ENCODE measurements at regions of chr3 and their contacts with region 1.

Region 1: GRCh38 chr3:130539005-130539404 is 22.0 kb downstream of the COL6A6 start:
- DNase-seq: peak; percentile 83
- H3K4me3 Mint-ChIP-seq: no peak overlapping the region
- H3K27ac Mint-ChIP-seq: no peak overlapping the region
- H3K4me1 Mint-ChIP-seq: no peaks in the 10 kb centered on the region
- H3K27me3 Mint-ChIP-seq: peaks cover 44% of the 10 kb centered on the region
- CTCF ChIP-seq: peak; percentile 95

Region 2: GRCh38 chr3:130276203-130276803 is 262.7 kb before region 1 on chr3:
- CTCF ChIA-PET with region 1: interaction called, 33 read pairs
- intact Hi-C with region 1: loop called (anchors 1 kb)
- DNase-seq: peak; percentile 50
- H3K4me3 Mint-ChIP-seq: no peak overlapping the region
- H3K27ac Mint-ChIP-seq: no peak overlapping the region
- H3K4me1 Mint-ChIP-seq: no peaks in the 10 kb centered on the region
- H3K27me3 Mint-ChIP-seq: peaks cover 54% of the 10 kb centered on the region
- CTCF ChIP-seq: peak; percentile 88

Region 3: GRCh38 chr3:130480736-130481135 is 58.3 kb before region 1 on chr3:
- CTCF ChIA-PET with region 1: no interaction called
- intact Hi-C with region 1: loop called (anchors 2 kb)
- DNase-seq: peak; percentile 44
- H3K4me3 Mint-ChIP-seq: no peak overlapping the region
- H3K27ac Mint-ChIP-seq: no peak overlapping the region
- H3K4me1 Mint-ChIP-seq: no peaks in the 10 kb centered on the region
- H3K27me3 Mint-ChIP-seq: peaks cover 25% of the 10 kb centered on the region
- CTCF ChIP-seq: peak; percentile 49

Region 4: DNA sequence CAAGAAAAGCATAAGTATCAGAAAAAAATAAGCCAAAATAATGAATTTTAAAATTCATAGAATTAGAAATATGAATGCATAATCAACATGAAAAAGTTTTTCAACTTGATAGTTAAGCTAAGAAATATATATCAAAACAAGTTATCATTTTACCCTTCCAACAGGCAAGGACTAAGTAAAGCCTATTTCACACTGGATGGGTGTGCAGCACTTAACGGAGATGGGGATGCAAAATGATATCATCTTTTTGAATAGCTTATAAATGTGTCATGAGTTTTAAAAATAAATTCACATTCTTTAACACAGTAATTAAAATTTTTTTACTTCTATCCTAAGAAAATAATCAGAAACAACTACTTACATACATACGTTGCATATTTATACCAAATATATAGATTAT is 186.7 kb after region 1 on chr3:
- CTCF ChIA-PET with region 1: no interaction called
- intact Hi-C with region 1: loop called (anchors 1 kb)
- DNase-seq: no peak
- H3K4me3 Mint-ChIP-seq: no peak overlapping the region
- H3K27ac Mint-ChIP-seq: no peak overlapping the region
- H3K4me1 Mint-ChIP-seq: no peaks in the 10 kb centered on the region
- H3K27me3 Mint-ChIP-seq: no peaks in the 10 kb centered on the region
- CTCF ChIP-seq: no peak

Measured in Calu3 (cell line).